Transverse colon (tissue), 4 donors: ENCODE measurements at regions of chr2 and their contacts with region 1.

Region 1: GRCh38 chr2:217988014-217988839 is 14.6 kb downstream of the TNS1 start:
- DNase-seq: peak; percentile 86
- H3K4me3 ChIP-seq: no peak overlapping the region
- H3K27ac ChIP-seq: peak overlapping the region; percentile 59 to 72 (median 66)
- H3K4me1 ChIP-seq: peaks cover 10 to 16% (median 13%) of the 10 kb centered on the region in 4 donors
- H3K27me3 ChIP-seq: no peaks in the 10 kb centered on the region
- CTCF ChIP-seq: peak; percentile 81 to 90 (median 89)
- EP300 ChIP-seq: no peak
- POLR2A ChIP-seq: no peak

Region 2: GRCh38 chr2:217785544-217786045 is 202.6 kb before region 1 on chr2:
- in situ Hi-C with region 1: loop called in 2 of 4 experiments (anchors 10 to 25 kb)
- intact Hi-C with region 1: loop called (anchors 2 kb)
- DNase-seq: peak; percentile 80
- H3K4me3 ChIP-seq: no peak overlapping the region
- H3K27ac ChIP-seq: peak overlapping the region in 1 of 4 donors; percentile 5
- H3K4me1 ChIP-seq: no peaks in the 10 kb centered on the region
- H3K27me3 ChIP-seq: no peaks in the 10 kb centered on the region
- CTCF ChIP-seq: peak; percentile 89 to 99 (median 96)
- EP300 ChIP-seq: no peak
- POLR2A ChIP-seq: no peak

Region 3: GRCh38 chr2:217798743-217799562 is 189.3 kb before region 1 on chr2:
- in situ Hi-C with region 1: loop called in 3 of 4 experiments (anchors 5 to 25 kb)
- intact Hi-C with region 1: no loop called
- DNase-seq: peak; percentile 32
- H3K4me3 ChIP-seq: no peak overlapping the region
- H3K27ac ChIP-seq: peak overlapping the region; percentile 13 to 62 (median 50)
- H3K4me1 ChIP-seq: peaks cover 0 to 9% (median 3%) of the 10 kb centered on the region in 4 donors
- H3K27me3 ChIP-seq: no peaks in the 10 kb centered on the region
- CTCF ChIP-seq: no peak
- EP300 ChIP-seq: no peak
- POLR2A ChIP-seq: no peak

Region 4: GRCh38 chr2:217886720-217887309 is 101.4 kb before region 1 on chr2:
- in situ Hi-C with region 1: loop called in 1 of 4 experiments (anchors 10 kb)
- intact Hi-C with region 1: loop called (anchors 5 kb)
- DNase-seq: peak; percentile 81
- H3K4me3 ChIP-seq: no peak overlapping the region
- H3K27ac ChIP-seq: peak overlapping the region in 2 of 4 donors; percentile 7 to 58
- H3K4me1 ChIP-seq: no peaks in the 10 kb centered on the region
- H3K27me3 ChIP-seq: no peaks in the 10 kb centered on the region
- CTCF ChIP-seq: peak; percentile 74 to 83 (median 78)
- EP300 ChIP-seq: no peak
- POLR2A ChIP-seq: no peak

Region 5: DNA sequence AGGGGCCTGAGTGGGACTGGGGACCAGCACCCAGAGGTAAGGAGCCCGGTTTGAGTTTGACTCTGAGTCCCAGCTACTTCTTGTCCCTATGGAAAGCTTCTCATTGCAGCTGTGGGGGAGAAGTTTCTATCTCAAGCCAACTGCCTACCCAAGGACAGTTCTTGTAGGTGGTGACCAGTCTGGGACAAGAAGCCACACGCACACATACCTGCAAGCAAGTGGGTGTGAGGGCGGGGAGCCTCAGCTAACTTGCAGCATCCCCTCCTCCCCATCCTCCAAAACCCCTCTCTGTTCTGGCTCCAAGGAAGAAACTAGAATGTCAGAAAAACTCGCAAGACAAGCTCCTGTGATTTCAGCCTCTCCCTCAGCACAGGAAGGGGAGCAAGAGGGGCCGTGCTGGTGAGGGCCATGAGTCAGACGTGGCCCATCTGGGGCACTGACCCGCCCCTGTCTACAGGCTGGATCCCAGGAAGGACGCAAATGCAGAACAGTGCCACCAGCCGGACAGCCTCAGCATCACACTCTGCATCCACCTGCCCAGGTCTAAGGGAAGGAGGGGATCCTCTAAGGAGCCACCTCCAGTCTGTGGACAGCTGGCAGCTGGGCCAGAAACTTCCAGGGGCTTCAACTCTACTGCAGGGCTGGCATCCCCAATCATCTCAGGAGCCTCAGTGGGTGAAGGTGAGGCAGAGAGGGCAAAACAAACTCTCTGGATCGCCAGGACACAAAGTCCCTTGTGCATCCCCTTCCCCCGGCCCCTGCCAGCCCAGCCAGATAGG is 88.8 kb before region 1 on chr2:
- in situ Hi-C with region 1: loop called in 1 of 4 experiments (anchors 10 kb)
- intact Hi-C with region 1: no loop called
- DNase-seq: peak; percentile 72
- H3K4me3 ChIP-seq: no peak overlapping the region
- H3K27ac ChIP-seq: peak overlapping the region; percentile 65 to 95 (median 89)
- H3K4me1 ChIP-seq: peaks cover 24 to 62% (median 49%) of the 10 kb centered on the region in 4 donors
- H3K27me3 ChIP-seq: no peaks in the 10 kb centered on the region
- CTCF ChIP-seq: peak; percentile 52 to 64 (median 58)
- EP300 ChIP-seq: no peak
- POLR2A ChIP-seq: no peak

Region 6: GRCh38 chr2:217943446-217944389 is 44.5 kb before region 1 on chr2:
- in situ Hi-C with region 1: no loop called
- intact Hi-C with region 1: loop called (anchors 5 kb)
- DNase-seq: peak; percentile 75
- H3K4me3 ChIP-seq: peak overlapping the region; percentile 38 to 50 (median 42)
- H3K27ac ChIP-seq: peak overlapping the region; percentile 85 to 95 (median 89)
- H3K4me1 ChIP-seq: peaks cover 4 to 32% (median 16%) of the 10 kb centered on the region in 4 donors
- H3K27me3 ChIP-seq: no peaks in the 10 kb centered on the region
- CTCF ChIP-seq: peak in 1 of 5 experiments; percentile 24
- EP300 ChIP-seq: no peak
- POLR2A ChIP-seq: peak; percentile 81

Region 7: DNA sequence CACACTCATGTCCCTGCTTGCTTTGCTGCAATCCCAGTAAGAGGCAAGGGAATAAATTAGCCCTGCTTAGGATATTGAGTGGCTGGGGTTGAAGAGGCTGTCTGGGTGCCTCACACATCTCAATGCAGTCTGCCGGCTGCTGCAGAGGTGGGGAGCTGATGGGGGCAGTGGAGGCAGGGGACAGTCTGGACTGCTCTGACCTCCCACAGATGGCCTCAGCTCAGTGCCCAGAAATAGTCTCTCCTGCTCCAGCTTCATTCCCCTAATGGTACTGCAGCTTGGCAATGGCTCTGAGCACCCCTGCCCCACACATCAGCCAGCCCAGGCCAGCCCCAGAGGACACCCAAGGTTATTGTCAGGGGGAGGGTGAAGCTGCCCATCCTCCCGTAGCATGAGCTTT is 36.1 kb after region 1 on chr2:
- in situ Hi-C with region 1: no loop called
- intact Hi-C with region 1: no loop called
- DNase-seq: peak; percentile 1
- H3K4me3 ChIP-seq: no peak overlapping the region
- H3K27ac ChIP-seq: no peak overlapping the region
- H3K4me1 ChIP-seq: no peaks in the 10 kb centered on the region
- H3K27me3 ChIP-seq: no peaks in the 10 kb centered on the region
- CTCF ChIP-seq: no peak
- EP300 ChIP-seq: no peak
- POLR2A ChIP-seq: no peak

Region 8: GRCh38 chr2:218063486-218063885 is 75.3 kb after region 1 on chr2:
- in situ Hi-C with region 1: no loop called
- intact Hi-C with region 1: no loop called
- DNase-seq: no peak
- H3K4me3 ChIP-seq: no peak overlapping the region
- H3K27ac ChIP-seq: no peak overlapping the region
- H3K4me1 ChIP-seq: peaks cover 0 to 2% (median under 1%) of the 10 kb centered on the region in 4 donors
- H3K27me3 ChIP-seq: peaks cover 4% of the 10 kb centered on the region
- CTCF ChIP-seq: no peak
- EP300 ChIP-seq: no peak
- POLR2A ChIP-seq: no peak

Region 9: GRCh38 chr2:218245214-218245613 is 257.0 kb after region 1 on chr2:
- in situ Hi-C with region 1: no loop called
- intact Hi-C with region 1: no loop called
- DNase-seq: no peak
- H3K4me3 ChIP-seq: no peak overlapping the region
- H3K27ac ChIP-seq: no peak overlapping the region
- H3K4me1 ChIP-seq: peaks cover 0 to 2% (median 0%) of the 10 kb centered on the region in 4 donors
- H3K27me3 ChIP-seq: no peaks in the 10 kb centered on the region
- CTCF ChIP-seq: no peak
- EP300 ChIP-seq: no peak
- POLR2A ChIP-seq: no peak